B cell (primary cell): ENCODE measurements at regions of chr11 and their contacts with region 1.

Region 1: DNA sequence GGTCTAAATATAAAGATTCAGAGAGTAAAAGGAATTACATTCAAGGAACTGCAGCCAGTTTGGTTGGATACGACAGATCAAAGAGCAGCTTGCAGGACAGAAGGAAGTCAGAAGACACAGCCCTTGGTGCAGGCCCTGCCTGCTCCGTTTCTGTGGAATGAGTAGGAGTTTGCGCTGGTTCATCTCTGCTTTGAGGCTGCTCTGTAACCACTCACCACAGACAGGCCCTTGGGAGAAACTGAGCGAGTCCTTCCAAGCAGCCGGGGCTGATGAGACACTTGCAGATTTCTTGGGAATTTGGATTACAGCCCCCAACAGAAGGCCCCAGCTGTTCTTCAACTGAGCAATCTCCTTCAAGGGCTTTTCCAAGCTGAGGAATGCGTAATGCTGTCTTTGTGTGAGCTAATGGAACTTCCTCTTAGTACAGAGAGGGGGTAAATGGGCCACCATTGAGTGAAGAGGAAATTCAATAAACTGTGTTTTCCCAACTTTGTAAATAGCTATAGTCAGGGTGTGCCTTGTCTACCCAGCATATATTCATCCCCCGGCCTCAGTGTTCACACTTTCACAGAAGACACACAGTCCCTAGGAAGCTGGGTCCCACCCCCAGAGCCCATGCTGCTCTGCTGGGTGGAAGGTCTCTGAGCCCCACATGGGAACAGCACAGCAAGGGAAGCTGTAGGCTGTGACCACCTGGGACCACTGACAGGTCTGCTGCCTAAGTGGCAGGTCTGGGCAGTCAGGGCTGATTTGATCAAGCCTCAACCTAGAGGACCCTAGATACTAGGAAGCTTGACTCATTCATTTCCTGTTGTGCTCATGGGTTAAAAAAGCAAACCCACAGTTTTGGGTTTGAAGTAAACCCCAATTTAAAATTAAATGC is 16.6 kb downstream of the IL10RA start:
- DNase-seq: peak; percentile 52
- ATAC-seq: peak; percentile 14
- H3K4me3 ChIP-seq: no peak overlapping the region
- H3K4me3 Mint-ChIP-seq: peak overlapping the region; percentile 56
- H3K27ac ChIP-seq: peak overlapping the region; percentile 64 to 99
- H3K27ac Mint-ChIP-seq: peak overlapping the region; percentile 99
- H3K4me1 ChIP-seq: peaks cover 67 to 76% of the 10 kb centered on the region in 2 donors
- H3K4me1 Mint-ChIP-seq: peaks cover 84% of the 10 kb centered on the region
- H3K27me3 ChIP-seq: no peaks in the 10 kb centered on the region
- H3K27me3 Mint-ChIP-seq: no peaks in the 10 kb centered on the region
- CTCF ChIP-seq: no peak

Region 2: GRCh38 chr11:117959438-117960149 is 43.2 kb before region 1 on chr11:
- CTCF ChIA-PET with region 1: interaction called, 3 read pairs
- POLR2A ChIA-PET with region 1: interaction called, 11 read pairs
- intact Hi-C with region 1: no loop called
- DNase-seq: no peak
- ATAC-seq: no peak
- H3K4me3 ChIP-seq: no peak overlapping the region
- H3K4me3 Mint-ChIP-seq: no peak overlapping the region
- H3K27ac ChIP-seq: peak overlapping the region in 1 of 2 donors; percentile 38
- H3K27ac Mint-ChIP-seq: no peak overlapping the region
- H3K4me1 ChIP-seq: peaks cover 7 to 8% of the 10 kb centered on the region in 2 donors
- H3K4me1 Mint-ChIP-seq: peaks cover 17% of the 10 kb centered on the region
- H3K27me3 ChIP-seq: no peaks in the 10 kb centered on the region
- H3K27me3 Mint-ChIP-seq: no peaks in the 10 kb centered on the region
- CTCF ChIP-seq: no peak

Region 3: DNA sequence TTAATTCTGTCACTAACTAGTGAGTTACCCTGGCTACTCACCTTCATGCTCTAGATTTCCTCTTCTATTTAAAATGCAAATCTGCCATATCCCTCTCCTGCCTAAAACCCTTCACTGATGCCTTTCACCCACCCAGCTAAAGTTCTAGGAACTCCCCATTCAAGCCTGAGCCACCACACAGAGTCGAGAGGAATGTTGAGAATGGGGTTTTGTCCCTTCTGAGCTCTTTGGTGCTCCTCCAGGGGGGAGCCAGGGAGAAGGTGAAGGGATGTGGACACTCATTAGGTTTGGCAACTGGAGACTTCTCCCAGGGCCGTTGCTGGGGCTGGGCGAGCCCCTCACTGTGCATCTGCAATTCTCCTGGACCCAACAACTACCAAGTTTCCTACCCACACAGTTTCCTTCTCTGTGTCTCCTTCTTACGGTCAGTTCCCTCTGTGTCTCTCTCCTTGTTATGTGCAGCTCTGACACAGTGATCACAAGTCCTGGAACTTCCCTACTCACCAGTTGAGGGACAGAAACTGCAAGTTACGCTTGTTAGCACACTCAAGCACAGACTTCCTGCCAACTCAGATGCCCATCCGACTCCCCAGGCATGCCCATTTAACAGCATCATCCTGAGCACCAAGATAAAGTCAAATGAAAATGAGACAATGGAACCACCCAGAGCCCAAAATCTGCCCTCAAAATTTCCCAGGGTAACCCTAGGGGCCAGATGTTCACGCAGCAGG is 23.1 kb before region 1 on chr11:
- CTCF ChIA-PET with region 1: interaction called, 34 read pairs
- POLR2A ChIA-PET with region 1: interaction called, 346 read pairs
- intact Hi-C with region 1: loop called (anchors 5 kb)
- DNase-seq: peak; percentile 74
- ATAC-seq: peak; percentile 71
- H3K4me3 ChIP-seq: no peak overlapping the region
- H3K4me3 Mint-ChIP-seq: peak overlapping the region; percentile 59
- H3K27ac ChIP-seq: peak overlapping the region; percentile 69 to 79
- H3K27ac Mint-ChIP-seq: peak overlapping the region; percentile 79
- H3K4me1 ChIP-seq: peaks cover 33 to 49% of the 10 kb centered on the region in 2 donors
- H3K4me1 Mint-ChIP-seq: peaks cover 65% of the 10 kb centered on the region
- H3K27me3 ChIP-seq: no peaks in the 10 kb centered on the region
- H3K27me3 Mint-ChIP-seq: no peaks in the 10 kb centered on the region
- CTCF ChIP-seq: no peak

Region 4: DNA sequence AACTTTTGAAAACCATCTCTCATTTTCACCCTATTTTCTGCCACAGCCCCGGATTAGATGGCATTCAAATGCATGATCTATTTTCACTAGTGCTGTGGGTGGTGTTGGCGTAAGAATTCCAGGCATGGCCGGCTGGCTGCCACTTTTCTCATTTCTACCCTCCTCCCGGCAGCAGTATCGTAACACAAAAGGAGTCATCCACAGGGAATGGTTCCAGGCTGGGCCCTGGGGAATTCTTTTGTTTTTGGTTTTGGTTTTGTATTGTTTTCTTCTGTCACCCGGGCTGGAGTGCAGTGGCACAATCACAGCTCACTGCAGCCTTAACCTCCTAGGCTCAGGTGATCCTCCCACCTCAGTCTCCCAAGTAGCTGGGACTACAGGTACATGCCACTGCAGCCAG is 208.2 kb after region 1 on chr11:
- CTCF ChIA-PET with region 1: no interaction called
- POLR2A ChIA-PET with region 1: no interaction called
- intact Hi-C with region 1: no loop called
- DNase-seq: no peak
- ATAC-seq: no peak
- H3K4me3 ChIP-seq: no peak overlapping the region
- H3K4me3 Mint-ChIP-seq: no peak overlapping the region
- H3K27ac ChIP-seq: no peak overlapping the region
- H3K27ac Mint-ChIP-seq: no peak overlapping the region
- H3K4me1 ChIP-seq: peaks cover 51 to 52% of the 10 kb centered on the region in 2 donors
- H3K4me1 Mint-ChIP-seq: peaks cover 53% of the 10 kb centered on the region
- H3K27me3 ChIP-seq: no peaks in the 10 kb centered on the region
- H3K27me3 Mint-ChIP-seq: peaks cover 35% of the 10 kb centered on the region
- CTCF ChIP-seq: no peak